Colonic mucosa (tissue), 4 donors: ENCODE measurements at regions of chr19 and their contacts with region 1.

Region 1: DNA sequence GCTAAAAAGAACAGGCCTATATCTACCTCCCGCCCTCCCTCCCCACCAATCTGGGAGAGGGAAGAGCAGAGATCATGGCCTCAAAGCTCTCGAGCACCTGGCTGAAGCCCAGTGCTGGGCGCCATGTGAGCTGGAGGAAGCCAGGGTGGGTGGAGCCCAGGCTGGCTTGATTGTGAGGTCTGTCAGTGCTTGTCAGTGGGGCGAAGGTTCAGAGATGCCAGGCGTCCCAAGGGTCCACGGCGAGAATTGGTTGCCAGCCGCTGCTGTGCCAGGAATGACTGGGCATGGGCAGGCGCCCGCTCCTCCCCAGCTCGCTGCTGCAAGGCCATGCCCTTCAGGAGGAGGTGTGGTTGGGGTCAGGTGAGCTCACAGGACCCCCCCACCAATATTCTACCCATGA is 11.5 kb downstream of the BEST2 start:
- DNase-seq: no peak
- H3K4me3 ChIP-seq: no peak overlapping the region
- H3K27ac ChIP-seq: no peak overlapping the region
- H3K4me1 ChIP-seq: no peaks in the 10 kb centered on the region
- H3K27me3 ChIP-seq: no peaks in the 10 kb centered on the region
- CTCF ChIP-seq: no peak

Region 2: DNA sequence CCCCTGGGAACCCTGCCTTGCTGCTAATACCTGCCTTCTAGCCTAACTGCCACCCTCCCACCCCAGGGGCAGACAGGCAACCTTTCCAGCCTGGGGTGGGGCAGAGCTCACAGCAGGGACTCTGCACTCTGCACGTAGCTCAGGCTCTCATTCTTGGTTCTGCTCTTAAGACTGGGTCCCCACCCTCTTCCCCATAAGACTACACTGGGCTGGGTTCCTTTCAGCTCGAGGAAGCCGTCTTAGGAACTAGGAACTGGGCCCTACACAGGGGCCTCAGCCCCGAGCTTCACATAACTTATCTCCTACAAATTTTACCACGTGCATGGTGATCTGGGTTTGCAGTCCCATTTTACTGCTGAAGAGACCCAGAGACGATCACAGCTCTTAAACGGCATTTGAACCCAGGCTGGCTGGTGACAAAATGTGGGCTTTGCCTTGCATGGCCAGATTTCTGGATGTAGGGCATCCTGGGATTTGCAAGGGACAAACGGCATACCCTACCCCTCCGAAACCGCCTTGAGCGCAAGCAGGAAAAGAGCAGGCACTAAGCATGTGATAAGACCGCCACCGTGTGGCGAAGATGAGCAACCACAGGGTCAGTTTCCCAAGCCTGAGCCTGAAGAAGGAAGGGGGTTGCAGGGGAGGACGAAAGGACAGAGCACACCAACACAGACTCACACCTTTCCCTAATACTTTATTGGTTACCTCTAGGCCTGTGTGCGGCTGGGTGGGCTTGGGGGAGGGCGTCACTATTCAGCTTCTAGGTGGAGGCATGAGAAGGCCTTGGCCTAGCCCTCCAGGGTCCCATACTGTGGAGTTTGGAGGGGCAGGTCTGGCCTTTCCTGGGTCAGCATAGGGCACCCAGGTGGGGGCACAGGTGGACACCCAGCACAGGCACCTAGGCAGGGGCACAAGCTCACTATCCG is 33.3 kb after region 1 on chr19:
- intact Hi-C with region 1: loop called (anchors 5 kb)
- DNase-seq: peak; percentile 83
- H3K4me3 ChIP-seq: no peak overlapping the region
- H3K27ac ChIP-seq: peak overlapping the region; percentile 87
- H3K4me1 ChIP-seq: peaks cover 14% of the 10 kb centered on the region
- H3K27me3 ChIP-seq: no peaks in the 10 kb centered on the region
- CTCF ChIP-seq: peak; percentile 89

Region 3: DNA sequence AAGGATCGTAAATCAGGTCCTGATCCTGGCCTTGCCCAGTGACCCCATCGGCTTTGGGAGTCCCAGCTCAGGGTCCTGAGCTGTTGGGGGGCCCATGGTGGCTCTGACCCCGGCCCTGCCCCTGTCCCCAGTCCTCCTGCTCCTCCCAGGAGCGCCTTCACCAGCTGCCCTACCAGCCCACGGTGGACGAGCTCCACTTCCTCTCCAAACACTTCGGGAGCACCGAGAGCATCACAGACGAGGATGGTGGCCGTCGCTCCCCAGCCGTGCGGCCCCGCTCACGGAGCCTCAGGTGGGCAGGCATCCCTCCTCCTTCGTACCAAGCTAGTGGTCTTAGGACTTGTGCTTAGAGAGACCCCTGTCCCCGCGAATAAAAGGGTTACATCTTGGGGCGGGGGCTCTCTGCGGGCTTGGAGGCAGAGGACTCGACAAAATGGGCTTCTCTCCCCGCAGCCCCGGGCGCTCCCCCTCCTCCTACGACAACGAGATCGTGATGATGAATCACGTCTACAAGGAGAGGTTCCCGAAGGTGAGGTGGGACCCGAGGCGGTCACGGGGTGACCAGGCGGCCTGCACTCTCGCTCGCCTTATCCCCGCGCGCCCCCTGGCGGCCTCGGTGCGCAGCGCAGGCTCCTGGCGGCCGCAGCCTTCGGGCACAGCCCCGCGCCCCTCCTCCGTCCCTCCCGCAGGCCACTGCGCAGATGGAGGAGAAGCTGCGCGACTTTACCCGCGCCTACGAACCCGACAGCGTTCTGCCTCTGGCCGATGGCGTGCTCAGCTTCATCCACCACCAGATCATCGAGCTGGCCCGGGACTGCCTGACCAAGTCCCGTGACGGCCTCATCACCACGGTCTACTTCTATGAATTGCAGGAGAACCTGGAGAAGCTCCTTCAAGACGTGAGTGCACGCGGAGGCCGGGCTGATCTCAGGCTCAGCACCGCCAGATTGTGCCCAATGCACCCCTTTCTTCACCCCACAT is 84.3 kb after region 1 on chr19:
- intact Hi-C with region 1: loop called (anchors 2 kb)
- DNase-seq: peak; percentile 86
- H3K4me3 ChIP-seq: no peak overlapping the region
- H3K27ac ChIP-seq: no peak overlapping the region
- H3K4me1 ChIP-seq: no peaks in the 10 kb centered on the region
- H3K27me3 ChIP-seq: no peaks in the 10 kb centered on the region
- CTCF ChIP-seq: peak; percentile 99